CD4-positive, alpha-beta T cell (primary cell): ENCODE measurements at regions of chr19 and their contacts with region 1.

Region 1: DNA sequence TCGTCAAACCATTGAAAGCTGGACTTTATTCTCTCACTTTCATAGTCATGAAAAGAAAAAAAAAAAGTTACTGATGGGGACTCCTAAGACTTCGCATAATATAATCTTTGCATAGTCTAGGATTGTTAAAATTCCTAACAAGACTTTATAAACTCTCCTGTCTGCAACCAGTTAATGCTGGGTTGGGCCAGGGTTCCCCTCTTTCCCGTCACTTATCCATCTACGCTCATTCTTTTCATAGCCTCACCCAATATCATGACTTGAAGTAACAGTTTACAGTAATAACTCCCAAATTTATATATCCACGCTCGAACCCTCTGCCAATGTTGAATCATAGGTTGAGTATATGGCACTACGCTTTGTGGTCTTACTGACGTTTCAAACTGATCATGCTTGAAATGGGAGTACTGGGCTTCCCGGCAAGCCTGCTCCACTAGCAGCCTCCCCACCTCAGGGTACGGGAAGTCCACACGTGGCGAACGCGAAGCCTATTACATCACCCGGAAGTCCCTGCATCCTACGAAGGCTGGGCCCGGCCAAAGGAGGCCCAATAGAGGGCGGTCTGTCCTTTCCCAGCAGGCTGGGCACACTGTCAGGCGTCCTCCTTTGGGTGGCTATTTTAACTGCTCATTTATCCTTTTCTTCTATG is 743 bp upstream of the ZNF460 start:
- DNase-seq: peak; percentile 59 to 93 (median 70)
- ATAC-seq: peak; percentile 66
- H3K4me3 ChIP-seq: peak overlapping the region; percentile 76
- H3K4me3 Mint-ChIP-seq: no peak overlapping the region
- H3K27ac ChIP-seq: peak overlapping the region; percentile 95 to 100
- H3K27ac Mint-ChIP-seq: no peak overlapping the region
- H3K4me1 ChIP-seq: peaks cover 42% of the 10 kb centered on the region
- H3K4me1 Mint-ChIP-seq: peaks cover 27% of the 10 kb centered on the region
- H3K27me3 ChIP-seq: no peaks in the 10 kb centered on the region
- H3K27me3 Mint-ChIP-seq: no peaks in the 10 kb centered on the region
- CTCF ChIP-seq: no peak

Region 2: GRCh38 chr19:55353803-55354697 is 1925.5 kb before region 1 on chr19:
- CTCF ChIA-PET with region 1: no interaction called
- POLR2A ChIA-PET with region 1: no interaction called
- intact Hi-C with region 1: no loop called
- DNase-seq: peak; percentile 30 to 85 (median 60)
- ATAC-seq: peak; percentile 67
- H3K4me3 ChIP-seq: peak overlapping the region; percentile 54
- H3K4me3 Mint-ChIP-seq: peak overlapping the region; percentile 51
- H3K27ac ChIP-seq: no peak overlapping the region
- H3K27ac Mint-ChIP-seq: no peak overlapping the region
- H3K4me1 ChIP-seq: peaks cover 29% of the 10 kb centered on the region
- H3K4me1 Mint-ChIP-seq: peaks cover 25% of the 10 kb centered on the region
- H3K27me3 ChIP-seq: peaks cover 34% of the 10 kb centered on the region in 2 experiments
- H3K27me3 Mint-ChIP-seq: peaks cover 58% of the 10 kb centered on the region
- CTCF ChIP-seq: no peak

Region 3: DNA sequence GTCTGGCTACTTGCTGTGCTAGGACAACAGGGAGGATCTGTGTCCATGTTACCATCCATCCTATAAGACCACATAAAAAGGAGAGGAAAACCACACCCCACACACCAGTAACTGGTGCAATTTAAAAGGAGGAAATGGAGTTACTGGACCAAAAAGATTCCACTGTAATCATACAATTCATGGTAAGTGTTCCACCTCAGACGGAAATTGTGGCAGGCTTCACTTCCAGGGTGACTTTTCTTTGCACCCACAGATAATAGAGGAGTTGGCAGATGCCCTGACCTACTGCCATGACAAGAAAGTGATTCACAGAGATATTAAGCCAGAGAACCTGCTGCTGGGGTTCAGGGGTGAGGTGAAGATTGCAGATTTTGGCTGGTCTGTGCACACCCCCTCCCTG is 46.3 kb before region 1 on chr19:
- CTCF ChIA-PET with region 1: no interaction called
- POLR2A ChIA-PET with region 1: no interaction called
- intact Hi-C with region 1: no loop called
- DNase-seq: no peak
- ATAC-seq: no peak
- H3K4me3 ChIP-seq: no peak overlapping the region
- H3K4me3 Mint-ChIP-seq: no peak overlapping the region
- H3K27ac ChIP-seq: no peak overlapping the region
- H3K27ac Mint-ChIP-seq: no peak overlapping the region
- H3K4me1 ChIP-seq: no peaks in the 10 kb centered on the region
- H3K4me1 Mint-ChIP-seq: no peaks in the 10 kb centered on the region
- H3K27me3 ChIP-seq: no peaks in the 10 kb centered on the region
- H3K27me3 Mint-ChIP-seq: peaks cover 10% of the 10 kb centered on the region
- CTCF ChIP-seq: no peak

Region 4: DNA sequence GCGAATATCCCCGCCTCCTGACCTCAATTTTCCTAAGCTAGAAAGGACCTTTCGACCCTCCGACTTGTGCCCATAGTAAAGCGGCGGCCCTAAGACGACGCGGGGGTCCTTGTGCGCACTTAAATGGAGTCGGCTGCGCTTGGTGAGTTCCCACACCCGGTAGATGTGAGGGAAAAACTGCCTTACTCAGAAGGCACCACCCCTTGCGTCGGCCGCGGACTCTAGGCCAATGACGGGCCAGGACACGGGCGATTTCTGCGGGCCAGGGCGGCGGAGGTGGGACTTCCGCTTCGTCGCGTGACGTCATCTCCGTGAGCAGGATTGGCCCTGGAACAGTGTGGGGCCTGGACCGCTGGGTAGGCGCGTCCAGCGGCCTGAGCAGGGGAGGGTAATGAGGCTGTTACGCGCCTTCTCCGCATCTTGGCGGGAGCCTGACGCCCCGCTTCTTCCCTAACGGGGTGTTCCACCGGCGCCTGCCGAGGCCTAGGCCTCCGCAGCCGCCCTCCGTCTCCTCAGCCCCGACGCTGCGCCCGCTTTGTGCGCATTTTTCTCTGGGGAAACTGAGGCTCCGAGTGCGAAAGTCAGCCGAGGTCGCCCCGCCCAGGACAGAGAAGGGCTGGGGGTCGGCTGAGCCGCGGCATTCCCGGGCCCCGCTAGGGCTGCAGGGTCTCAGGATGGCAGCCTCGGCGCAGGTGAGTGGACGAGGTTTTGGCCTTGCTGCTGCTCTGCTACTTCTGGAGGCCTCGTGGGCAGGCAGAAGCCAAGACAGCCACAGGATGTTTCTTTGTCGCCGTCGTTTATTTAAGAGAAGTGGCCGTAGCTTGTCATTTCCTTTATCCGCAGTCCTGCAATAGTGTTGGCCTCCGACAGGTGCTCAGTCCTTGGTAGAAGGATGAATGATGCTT is 40.9 kb after region 1 on chr19 and contains the start of gene ZNF543:
- CTCF ChIA-PET with region 1: no interaction called
- POLR2A ChIA-PET with region 1: no interaction called
- intact Hi-C with region 1: loop called (anchors 2 to 5 kb)
- DNase-seq: peak; percentile 81 to 96 (median 89)
- ATAC-seq: peak; percentile 95
- H3K4me3 ChIP-seq: peak within 1 kb of the TSS; percentile 83
- H3K4me3 Mint-ChIP-seq: peak within 1 kb of the TSS; percentile 95
- H3K27ac ChIP-seq: peak within 1 kb of the TSS; percentile 68 to 74
- H3K27ac Mint-ChIP-seq: peak within 1 kb of the TSS; percentile 96
- H3K4me1 ChIP-seq: peaks cover 23% of the 10 kb centered on the region
- H3K4me1 Mint-ChIP-seq: peaks cover 33% of the 10 kb centered on the region
- H3K27me3 ChIP-seq: peaks cover 12 to 14% of the 10 kb centered on the region in 2 experiments
- H3K27me3 Mint-ChIP-seq: peaks cover 29% of the 10 kb centered on the region
- CTCF ChIP-seq: no peak
- total RNA-seq, gene ZNF543: 4.0 to 4.3 TPM